Endothelial cell of umbilical vein (primary cell): ENCODE measurements at regions of chr5 and their contacts with region 1.

Region 1: GRCh38 chr5:125262782-125263181 is 516.3 kb upstream of the ZNF608 start:
- DNase-seq: peak; percentile 83
- H3K4me3 ChIP-seq: no peak overlapping the region
- H3K27ac ChIP-seq: peak overlapping the region; percentile 81
- H3K4me1 ChIP-seq: peaks cover 22% of the 10 kb centered on the region
- H3K27me3 ChIP-seq: no peaks in the 10 kb centered on the region
- CTCF ChIP-seq: no peak
- POLR2A ChIP-seq: no peak

Region 2: DNA sequence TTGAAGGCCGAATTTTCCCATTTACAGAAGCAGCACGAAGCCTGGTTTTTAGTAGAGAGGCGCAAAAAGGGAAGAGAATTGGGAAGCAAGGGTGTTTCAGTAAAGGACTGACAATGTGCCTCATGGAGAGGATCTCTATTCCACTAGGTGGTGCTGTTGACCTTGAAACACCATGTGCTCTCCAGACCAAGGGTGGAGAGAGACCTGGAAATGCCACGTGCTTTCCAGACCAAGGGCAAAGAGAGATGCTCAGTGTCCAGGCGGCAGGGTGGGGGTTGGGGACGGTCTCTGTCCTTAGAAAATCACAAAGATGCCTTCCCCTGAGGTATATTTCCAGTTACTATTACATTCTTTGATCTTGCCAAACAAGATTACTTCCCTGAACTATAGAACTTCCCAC is 1325.6 kb before region 1 on chr5:
- CTCF ChIA-PET with region 1: no interaction called
- POLR2A ChIA-PET with region 1: no interaction called
- dilution Hi-C with region 1: no loop called
- intact Hi-C with region 1: loop called (anchors 2 kb)
- DNase-seq: peak; percentile 68
- H3K4me3 ChIP-seq: no peak overlapping the region
- H3K27ac ChIP-seq: no peak overlapping the region
- H3K4me1 ChIP-seq: no peaks in the 10 kb centered on the region
- H3K27me3 ChIP-seq: no peaks in the 10 kb centered on the region
- CTCF ChIP-seq: peak; percentile 51 to 62
- POLR2A ChIP-seq: no peak

Region 3: DNA sequence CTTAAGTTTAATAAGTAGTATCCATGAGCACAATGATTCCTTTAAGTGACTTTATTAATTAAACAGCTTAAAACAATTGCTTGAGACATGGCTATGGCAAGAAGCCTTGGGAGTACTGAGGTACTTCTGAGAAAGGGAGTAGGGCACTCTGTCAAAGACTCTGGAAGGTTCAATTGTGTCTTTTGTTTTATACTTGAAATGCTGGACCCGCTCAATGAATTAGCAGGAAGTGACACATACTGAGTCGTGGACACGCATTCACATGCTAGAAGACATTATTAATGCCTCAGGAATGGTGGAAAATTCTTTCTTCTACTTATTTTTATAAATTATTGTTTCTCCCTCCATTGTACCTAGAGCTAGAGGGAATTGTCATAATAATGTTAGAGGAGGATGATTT is 169.0 kb before region 1 on chr5:
- CTCF ChIA-PET with region 1: no interaction called
- POLR2A ChIA-PET with region 1: no interaction called
- dilution Hi-C with region 1: no loop called
- intact Hi-C with region 1: loop called (anchors 5 kb)
- DNase-seq: peak; percentile 90
- H3K4me3 ChIP-seq: no peak overlapping the region
- H3K27ac ChIP-seq: peak overlapping the region; percentile 83
- H3K4me1 ChIP-seq: peaks cover 12% of the 10 kb centered on the region
- H3K27me3 ChIP-seq: no peaks in the 10 kb centered on the region
- CTCF ChIP-seq: no peak
- POLR2A ChIP-seq: no peak

Region 4: DNA sequence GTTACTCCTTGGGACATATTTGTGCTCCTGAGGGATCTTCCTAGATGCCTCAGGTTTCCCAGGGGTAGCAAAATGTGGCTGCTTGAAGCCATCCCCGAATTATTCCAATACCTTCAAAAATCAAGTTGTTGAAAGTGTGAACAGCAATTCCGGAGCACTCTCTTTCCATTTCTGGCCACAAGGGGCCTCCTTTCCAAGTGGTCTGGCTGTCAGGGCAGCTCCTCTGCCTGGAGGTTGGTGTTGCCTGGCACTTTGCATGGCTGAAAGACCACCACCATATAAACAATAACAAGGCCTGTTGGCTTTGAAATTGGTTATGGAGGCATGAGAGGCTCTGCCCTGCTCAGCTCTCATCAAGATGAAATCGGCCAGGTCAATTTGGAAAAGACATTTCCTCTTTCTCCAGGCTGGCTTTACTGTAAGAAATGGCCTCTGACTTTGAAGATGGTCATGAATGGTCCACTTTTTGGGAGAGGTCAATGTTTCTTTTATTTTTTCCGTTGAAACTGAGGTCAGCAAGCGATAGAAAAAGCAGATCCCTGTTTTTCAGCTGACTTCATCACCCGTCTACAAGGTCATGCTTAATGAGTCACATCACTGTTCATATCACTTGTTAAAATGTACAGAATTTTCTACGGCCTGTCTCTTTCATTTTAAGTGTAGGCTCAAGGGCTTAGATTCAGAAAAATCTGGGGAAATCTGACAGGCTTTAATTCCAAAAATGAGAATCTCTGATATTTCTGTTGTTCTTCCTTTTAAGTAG is 35.3 kb before region 1 on chr5:
- CTCF ChIA-PET with region 1: interaction called, 4 read pairs
- POLR2A ChIA-PET with region 1: no interaction called
- dilution Hi-C with region 1: no loop called
- intact Hi-C with region 1: loop called (anchors 2 kb)
- DNase-seq: peak; percentile 33
- H3K4me3 ChIP-seq: no peak overlapping the region
- H3K27ac ChIP-seq: no peak overlapping the region
- H3K4me1 ChIP-seq: no peaks in the 10 kb centered on the region
- H3K27me3 ChIP-seq: no peaks in the 10 kb centered on the region
- CTCF ChIP-seq: peak; percentile 48 to 62
- POLR2A ChIP-seq: no peak

Region 5: GRCh38 chr5:125311743-125312142 is 49.0 kb after region 1 on chr5:
- CTCF ChIA-PET with region 1: interaction called, 3 read pairs
- POLR2A ChIA-PET with region 1: no interaction called
- dilution Hi-C with region 1: no loop called
- intact Hi-C with region 1: loop called (anchors 2 kb)
- DNase-seq: peak; percentile 77
- H3K4me3 ChIP-seq: no peak overlapping the region
- H3K27ac ChIP-seq: peak overlapping the region; percentile 58
- H3K4me1 ChIP-seq: peaks cover 11% of the 10 kb centered on the region
- H3K27me3 ChIP-seq: no peaks in the 10 kb centered on the region
- CTCF ChIP-seq: no peak
- POLR2A ChIP-seq: no peak

Region 6: GRCh38 chr5:125517973-125518550 is 255.3 kb after region 1 on chr5:
- CTCF ChIA-PET with region 1: no interaction called
- POLR2A ChIA-PET with region 1: no interaction called
- dilution Hi-C with region 1: no loop called
- intact Hi-C with region 1: no loop called
- DNase-seq: no peak
- H3K4me3 ChIP-seq: no peak overlapping the region
- H3K27ac ChIP-seq: no peak overlapping the region
- H3K4me1 ChIP-seq: no peaks in the 10 kb centered on the region
- H3K27me3 ChIP-seq: no peaks in the 10 kb centered on the region
- CTCF ChIP-seq: no peak
- POLR2A ChIP-seq: no peak

Region 7: GRCh38 chr5:125856949-125857348 is 594.2 kb after region 1 on chr5:
- CTCF ChIA-PET with region 1: no interaction called
- POLR2A ChIA-PET with region 1: no interaction called
- dilution Hi-C with region 1: no loop called
- intact Hi-C with region 1: no loop called
- DNase-seq: no peak
- H3K4me3 ChIP-seq: no peak overlapping the region
- H3K27ac ChIP-seq: no peak overlapping the region
- H3K4me1 ChIP-seq: no peaks in the 10 kb centered on the region
- H3K27me3 ChIP-seq: no peaks in the 10 kb centered on the region
- CTCF ChIP-seq: no peak
- POLR2A ChIP-seq: no peak